ENCODE measurements at regions of chr6 and their contacts with region 1.

Region 1: DNA sequence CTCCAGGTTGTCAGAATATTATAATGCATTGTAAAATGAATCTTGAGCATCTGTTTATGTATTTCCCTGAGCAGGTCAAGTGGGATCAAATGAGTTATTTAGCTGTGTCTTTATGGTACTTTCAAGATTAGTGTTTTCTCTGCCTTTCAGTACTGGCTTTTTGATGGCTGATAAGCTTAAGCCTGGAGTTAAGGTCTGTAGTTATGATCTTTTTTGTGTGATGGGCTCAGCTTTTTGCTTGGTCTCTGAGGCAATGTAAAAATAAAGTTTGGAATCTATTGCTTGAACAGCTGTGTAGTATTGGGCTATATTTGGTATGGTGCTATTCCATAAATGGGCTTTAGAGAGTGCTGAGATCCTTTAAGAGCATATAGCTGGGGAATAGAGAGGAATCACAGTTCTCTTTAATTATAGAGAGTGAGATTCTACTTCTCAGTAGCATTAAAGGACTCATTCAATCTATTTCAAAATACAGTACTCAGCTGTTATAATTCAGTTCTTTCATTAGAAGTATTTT is 40.7 kb downstream of the ZNF451 start:
- DNase-seq: no peak
- ATAC-seq: no peak
- H3K4me3 ChIP-seq: no peak overlapping the region
- H3K4me3 Mint-ChIP-seq: no peak overlapping the region
- H3K27ac ChIP-seq: no peak overlapping the region
- H3K27ac Mint-ChIP-seq: no peak overlapping the region
- H3K4me1 ChIP-seq: no peaks in the 10 kb centered on the region
- H3K4me1 Mint-ChIP-seq: peaks cover 0 to 11% (median 2%) of the 10 kb centered on the region in 7 donors
- H3K27me3 ChIP-seq: no peaks in the 10 kb centered on the region
- H3K27me3 Mint-ChIP-seq: no peaks in the 10 kb centered on the region

Region 2: DNA sequence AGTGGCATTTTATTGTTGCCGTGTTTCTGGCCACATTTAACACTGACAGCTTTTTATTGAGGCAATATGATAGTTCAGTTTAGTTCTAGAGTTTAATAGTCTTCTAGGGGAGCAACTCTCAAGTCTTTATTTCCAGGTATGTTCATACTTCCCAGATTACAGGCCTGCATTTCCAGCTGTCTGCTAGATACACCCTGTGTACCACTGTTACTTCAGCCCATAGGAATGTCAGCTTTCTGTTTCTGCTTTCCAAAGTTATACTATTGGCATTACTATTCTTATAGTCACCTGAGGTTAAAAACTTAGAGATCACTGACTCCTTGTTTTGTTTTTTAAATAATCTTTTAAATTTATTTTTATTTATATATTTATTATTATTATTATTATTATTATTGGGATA is 33.1 kb before region 1 on chr6:
- CTCF ChIA-PET with region 1: no interaction called
- POLR2A ChIA-PET with region 1: no interaction called
- intact Hi-C with region 1: loop called in 1 of 2 experiments (anchors 5 kb)
- DNase-seq: no peak
- ATAC-seq: no peak
- H3K4me3 ChIP-seq: no peak overlapping the region
- H3K4me3 Mint-ChIP-seq: peak overlapping the region in 4 of 10 donors; percentile 4 to 40 (median 18)
- H3K27ac ChIP-seq: no peak overlapping the region
- H3K27ac Mint-ChIP-seq: peak overlapping the region in 1 of 9 donors; percentile 28
- H3K4me1 ChIP-seq: peaks cover 6 to 13% of the 10 kb centered on the region in 2 donors
- H3K4me1 Mint-ChIP-seq: peaks cover 23 to 73% (median 51%) of the 10 kb centered on the region in 7 donors
- H3K27me3 ChIP-seq: no peaks in the 10 kb centered on the region
- H3K27me3 Mint-ChIP-seq: no peaks in the 10 kb centered on the region

Region 3: DNA sequence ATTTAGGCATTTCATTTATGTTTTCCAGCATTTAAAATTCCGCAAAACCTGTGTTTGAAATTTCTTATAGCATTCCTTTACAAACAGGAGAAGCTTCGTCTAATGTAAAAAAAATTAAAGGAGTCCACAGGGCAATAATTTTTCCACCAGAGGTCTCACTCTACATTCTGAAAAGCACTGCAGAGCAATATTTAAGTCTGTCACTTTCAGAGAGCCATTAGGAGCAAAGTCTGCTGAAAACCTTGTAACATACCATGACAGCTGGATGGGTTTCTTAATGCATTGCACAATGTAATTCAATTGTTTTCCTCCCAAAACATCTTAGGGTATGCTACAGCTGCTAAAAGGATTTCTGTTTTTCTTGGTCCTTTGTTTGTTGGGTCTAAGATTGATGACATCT is 59.4 kb after region 1 on chr6:
- CTCF ChIA-PET with region 1: no interaction called
- POLR2A ChIA-PET with region 1: no interaction called
- intact Hi-C with region 1: no loop called
- DNase-seq: peak in 3 of 9 donors; percentile 6 to 15 (median 14)
- ATAC-seq: no peak
- H3K4me3 ChIP-seq: no peak overlapping the region
- H3K4me3 Mint-ChIP-seq: no peak overlapping the region
- H3K27ac ChIP-seq: no peak overlapping the region
- H3K27ac Mint-ChIP-seq: no peak overlapping the region
- H3K4me1 ChIP-seq: no peaks in the 10 kb centered on the region
- H3K4me1 Mint-ChIP-seq: peaks cover 0 to 10% (median 5%) of the 10 kb centered on the region in 7 donors
- H3K27me3 ChIP-seq: no peaks in the 10 kb centered on the region
- H3K27me3 Mint-ChIP-seq: no peaks in the 10 kb centered on the region

Measured in naive thymus-derived CD4-positive, alpha-beta T cell (primary cell).